CD8-positive, alpha-beta T cell (primary cell): ENCODE measurements at regions of chr5 and their contacts with region 1.

Region 1: DNA sequence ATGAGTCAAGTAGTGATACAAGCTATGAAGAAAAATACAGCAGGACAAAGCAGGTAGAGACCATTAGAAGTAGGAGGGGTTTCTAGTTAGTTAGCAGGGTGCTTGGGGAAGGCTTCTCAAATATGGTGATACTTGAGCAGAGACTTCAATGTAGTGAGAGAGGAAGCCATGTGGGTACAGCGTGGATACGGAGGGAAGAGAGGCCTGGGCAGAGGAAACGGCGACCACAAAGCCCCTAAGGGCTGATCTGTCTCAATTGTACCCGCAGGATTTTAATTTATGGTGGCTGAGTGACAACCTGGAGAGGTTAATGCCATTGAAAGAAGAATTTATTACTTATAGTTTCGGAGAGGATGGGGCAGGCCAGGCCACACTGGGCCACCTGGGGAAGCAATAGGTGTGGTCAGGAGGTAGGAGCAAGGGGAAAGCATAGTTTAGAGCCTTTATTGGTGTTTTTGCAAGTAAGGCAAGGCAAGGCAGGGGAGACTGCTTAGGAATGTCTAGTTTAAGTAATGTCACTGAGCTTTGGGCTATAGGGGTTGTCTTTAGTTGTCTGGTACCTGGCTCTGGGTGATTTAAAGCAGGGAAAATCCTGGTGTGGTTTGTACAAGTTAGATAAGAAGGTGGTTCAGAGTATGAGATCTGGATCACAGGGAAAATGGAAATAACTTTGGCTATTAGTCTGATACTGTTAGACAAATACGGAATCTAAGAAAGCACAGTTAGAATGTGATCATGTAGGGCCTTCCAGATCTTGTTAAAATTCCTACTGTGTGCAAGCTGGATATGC is 42.6 kb downstream of the GCNT4 start:
- DNase-seq: no peak
- ATAC-seq: no peak
- H3K4me3 ChIP-seq: no peak overlapping the region
- H3K4me3 Mint-ChIP-seq: no peak overlapping the region
- H3K27ac ChIP-seq: no peak overlapping the region
- H3K27ac Mint-ChIP-seq: no peak overlapping the region
- H3K4me1 ChIP-seq: no peaks in the 10 kb centered on the region
- H3K4me1 Mint-ChIP-seq: peaks cover 8% of the 10 kb centered on the region
- H3K27me3 ChIP-seq: no peaks in the 10 kb centered on the region
- H3K27me3 Mint-ChIP-seq: no peaks in the 10 kb centered on the region
- CTCF ChIP-seq: no peak

Region 2: GRCh38 chr5:74798977-74799911 is 210.5 kb before region 1 on chr5:
- CTCF ChIA-PET with region 1: no interaction called
- POLR2A ChIA-PET with region 1: no interaction called
- intact Hi-C with region 1: loop called in 1 of 2 experiments (anchors 5 kb)
- DNase-seq: no peak
- ATAC-seq: no peak
- H3K4me3 ChIP-seq: no peak overlapping the region
- H3K4me3 Mint-ChIP-seq: no peak overlapping the region
- H3K27ac ChIP-seq: no peak overlapping the region
- H3K27ac Mint-ChIP-seq: no peak overlapping the region
- H3K4me1 ChIP-seq: no peaks in the 10 kb centered on the region
- H3K4me1 Mint-ChIP-seq: no peaks in the 10 kb centered on the region
- H3K27me3 ChIP-seq: no peaks in the 10 kb centered on the region
- H3K27me3 Mint-ChIP-seq: no peaks in the 10 kb centered on the region
- CTCF ChIP-seq: no peak

Region 3: GRCh38 chr5:74966151-74967026 is 43.4 kb before region 1 on chr5:
- CTCF ChIA-PET with region 1: no interaction called
- POLR2A ChIA-PET with region 1: no interaction called
- intact Hi-C with region 1: no loop called
- DNase-seq: no peak
- ATAC-seq: no peak
- H3K4me3 ChIP-seq: no peak overlapping the region
- H3K4me3 Mint-ChIP-seq: no peak overlapping the region
- H3K27ac ChIP-seq: no peak overlapping the region
- H3K27ac Mint-ChIP-seq: no peak overlapping the region
- H3K4me1 ChIP-seq: no peaks in the 10 kb centered on the region
- H3K4me1 Mint-ChIP-seq: no peaks in the 10 kb centered on the region
- H3K27me3 ChIP-seq: peaks cover 0 to 3% of the 10 kb centered on the region in 2 experiments
- H3K27me3 Mint-ChIP-seq: peaks cover 9% of the 10 kb centered on the region
- CTCF ChIP-seq: no peak